Calu3 (cell line): ENCODE measurements at regions of chr7 and their contacts with region 1.

Region 1: GRCh38 chr7:21767300-21767900 is 178.3 kb downstream of the CDCA7L start:
- DNase-seq: peak; percentile 80
- H3K4me3 Mint-ChIP-seq: no peak overlapping the region
- H3K27ac Mint-ChIP-seq: no peak overlapping the region
- H3K4me1 Mint-ChIP-seq: no peaks in the 10 kb centered on the region
- H3K27me3 Mint-ChIP-seq: peaks cover 67% of the 10 kb centered on the region
- CTCF ChIP-seq: peak; percentile 90

Region 2: GRCh38 chr7:20778063-20778721 is 989.2 kb before region 1 on chr7:
- CTCF ChIA-PET with region 1: interaction called, 8 read pairs
- intact Hi-C with region 1: loop called (anchors 2 kb)
- DNase-seq: peak; percentile 79
- H3K4me3 Mint-ChIP-seq: peak overlapping the region; percentile 71
- H3K27ac Mint-ChIP-seq: no peak overlapping the region
- H3K4me1 Mint-ChIP-seq: peaks cover 14% of the 10 kb centered on the region
- H3K27me3 Mint-ChIP-seq: peaks cover 79% of the 10 kb centered on the region
- CTCF ChIP-seq: peak; percentile 97

Region 3: DNA sequence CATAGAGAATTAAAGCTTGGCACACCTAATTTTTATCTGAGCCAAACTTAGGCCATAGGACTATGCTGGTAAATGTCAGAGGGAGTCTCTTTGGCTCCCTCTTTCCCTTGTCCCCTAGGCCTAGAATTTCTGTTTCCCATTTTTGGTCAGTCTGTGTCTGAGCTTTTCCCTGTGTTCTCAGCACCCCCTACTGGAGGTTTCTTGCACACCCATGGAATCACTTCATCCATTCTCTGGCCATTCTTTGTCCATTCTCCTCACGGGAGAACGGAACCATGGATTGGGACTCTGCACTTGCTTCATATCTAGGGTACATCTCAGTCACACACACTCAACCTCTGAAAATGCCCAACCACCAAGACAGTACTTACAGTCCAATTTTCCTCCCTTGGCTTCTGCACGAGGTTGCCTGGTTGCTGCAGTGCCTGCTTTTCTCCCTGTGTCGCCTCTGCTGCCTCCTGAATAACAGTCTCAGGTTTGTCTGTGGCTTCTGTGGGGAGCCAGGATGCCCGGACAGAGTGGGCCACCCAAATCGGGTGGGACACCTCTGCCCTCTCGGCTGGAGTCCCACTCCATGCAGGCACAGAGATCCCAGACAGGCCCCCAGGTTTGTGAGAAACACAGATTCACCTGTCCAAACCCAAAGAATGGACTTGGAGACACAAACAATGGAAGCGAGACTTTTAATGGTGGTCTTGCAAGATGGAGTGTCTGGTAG is 259.6 kb before region 1 on chr7:
- CTCF ChIA-PET with region 1: interaction called, 3 read pairs
- intact Hi-C with region 1: loop called (anchors 5 kb)
- DNase-seq: peak; percentile 80
- H3K4me3 Mint-ChIP-seq: no peak overlapping the region
- H3K27ac Mint-ChIP-seq: no peak overlapping the region
- H3K4me1 Mint-ChIP-seq: peaks cover 20% of the 10 kb centered on the region
- H3K27me3 Mint-ChIP-seq: no peaks in the 10 kb centered on the region
- CTCF ChIP-seq: peak; percentile 87

Region 4: GRCh38 chr7:21544715-21545114 is 222.7 kb before region 1 on chr7:
- CTCF ChIA-PET with region 1: interaction called, 11 read pairs
- intact Hi-C with region 1: no loop called
- DNase-seq: no peak
- H3K4me3 Mint-ChIP-seq: no peak overlapping the region
- H3K27ac Mint-ChIP-seq: no peak overlapping the region
- H3K4me1 Mint-ChIP-seq: peaks cover 10% of the 10 kb centered on the region
- H3K27me3 Mint-ChIP-seq: peaks cover 34% of the 10 kb centered on the region
- CTCF ChIP-seq: no peak

Region 5: GRCh38 chr7:22001345-22002004 is 234.1 kb after region 1 on chr7:
- CTCF ChIA-PET with region 1: interaction called, 6 read pairs
- intact Hi-C with region 1: loop called (anchors 5 kb)
- DNase-seq: peak; percentile 69
- H3K4me3 Mint-ChIP-seq: no peak overlapping the region
- H3K27ac Mint-ChIP-seq: no peak overlapping the region
- H3K4me1 Mint-ChIP-seq: peaks cover 5% of the 10 kb centered on the region
- H3K27me3 Mint-ChIP-seq: peaks cover 33% of the 10 kb centered on the region
- CTCF ChIP-seq: peak; percentile 83